ENCODE measurements at regions of chr12 and their contacts with region 1.

Region 1: GRCh38 chr12:54207484-54208294 is 18.9 kb upstream of the SMUG1 start:
- DNase-seq: peak; percentile 37
- ATAC-seq: peak; percentile 96
- H3K4me3 ChIP-seq: no peak overlapping the region
- H3K27ac ChIP-seq: no peak overlapping the region
- H3K4me1 ChIP-seq: no peaks in the 10 kb centered on the region
- H3K27me3 ChIP-seq: peaks cover 68% of the 10 kb centered on the region
- CTCF ChIP-seq: peak; percentile 76
- POLR2A ChIP-seq: no peak
- RAD21 ChIP-seq: peak; percentile 63

Region 2: DNA sequence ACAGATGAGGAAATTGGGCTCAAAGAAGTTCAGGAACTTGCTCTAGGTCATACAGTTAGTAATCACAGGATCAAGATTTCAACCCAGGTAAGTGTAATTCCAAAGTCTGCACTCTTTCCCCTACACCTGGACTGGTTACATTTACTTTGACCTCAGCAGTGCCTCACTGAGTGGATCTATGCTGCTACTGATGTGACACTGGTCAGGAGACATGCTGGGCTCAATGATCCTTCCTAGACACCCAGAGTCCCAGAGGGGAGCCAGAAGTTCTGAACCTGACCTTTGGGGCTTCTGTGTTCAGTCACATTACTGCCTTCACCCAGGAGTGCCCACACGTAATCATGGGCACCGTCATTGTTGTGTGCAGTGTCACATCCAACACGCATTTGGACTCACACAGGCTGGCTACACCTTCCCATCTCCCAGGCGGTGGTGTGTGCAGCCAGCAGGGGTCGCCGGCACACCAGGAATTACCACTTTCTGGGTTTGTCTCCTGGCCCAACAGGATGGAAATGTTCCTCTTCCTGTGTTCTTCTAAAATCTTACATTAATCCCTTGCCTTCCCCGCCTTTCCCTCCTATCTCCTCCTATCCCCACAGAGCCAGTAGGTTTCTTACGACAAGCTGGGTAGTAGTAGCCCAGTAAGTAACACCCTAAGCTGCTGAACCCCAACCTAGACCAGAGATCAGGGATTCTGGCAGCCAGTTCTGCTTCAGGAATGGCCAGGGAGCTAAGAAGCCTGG is 506.0 kb before region 1 on chr12:
- CTCF ChIA-PET with region 1: no interaction called
- POLR2A ChIA-PET with region 1: no interaction called
- dilution Hi-C with region 1: no loop called
- in situ Hi-C with region 1: no loop called
- intact Hi-C with region 1: loop called (anchors 10 kb)
- DNase-seq: peak; percentile 66
- ATAC-seq: peak; percentile 98
- H3K4me3 ChIP-seq: no peak overlapping the region
- H3K27ac ChIP-seq: no peak overlapping the region
- H3K4me1 ChIP-seq: no peaks in the 10 kb centered on the region
- H3K27me3 ChIP-seq: peaks cover 67% of the 10 kb centered on the region
- CTCF ChIP-seq: peak; percentile 98
- POLR2A ChIP-seq: no peak
- RAD21 ChIP-seq: peak; percentile 97

Region 3: GRCh38 chr12:53757095-53757770 is 450.5 kb before region 1 on chr12:
- CTCF ChIA-PET with region 1: no interaction called
- POLR2A ChIA-PET with region 1: no interaction called
- dilution Hi-C with region 1: no loop called
- in situ Hi-C with region 1: no loop called
- intact Hi-C with region 1: loop called (anchors 5 kb)
- DNase-seq: peak; percentile 55
- ATAC-seq: peak; percentile 89
- H3K4me3 ChIP-seq: no peak overlapping the region
- H3K27ac ChIP-seq: no peak overlapping the region
- H3K4me1 ChIP-seq: peaks cover 2% of the 10 kb centered on the region
- H3K27me3 ChIP-seq: peaks cover 68% of the 10 kb centered on the region
- CTCF ChIP-seq: peak; percentile 64
- POLR2A ChIP-seq: no peak
- RAD21 ChIP-seq: peak; percentile 47

Region 4: DNA sequence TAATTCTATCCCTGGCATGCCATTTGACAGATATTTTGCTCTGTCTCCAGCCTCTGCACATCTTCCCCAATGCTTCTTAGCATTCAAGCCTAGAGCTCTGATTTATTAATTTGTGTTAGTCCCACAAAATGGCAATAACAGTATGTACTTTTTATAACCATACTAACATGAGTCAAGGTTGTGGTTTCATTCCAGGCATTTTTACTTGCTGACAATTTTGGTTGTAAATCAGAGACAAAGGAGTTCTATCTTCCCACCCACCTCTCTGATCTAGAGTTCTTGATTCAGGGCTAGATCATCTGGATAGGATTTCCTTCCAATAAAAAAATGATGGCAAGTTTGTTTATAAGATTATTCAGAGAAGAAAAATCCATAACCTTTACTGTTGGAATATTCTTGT is 437.4 kb before region 1 on chr12:
- CTCF ChIA-PET with region 1: no interaction called
- POLR2A ChIA-PET with region 1: no interaction called
- dilution Hi-C with region 1: no loop called
- in situ Hi-C with region 1: loop called (anchors 10 kb)
- intact Hi-C with region 1: no loop called
- DNase-seq: peak; percentile 97
- ATAC-seq: peak; percentile 84
- H3K4me3 ChIP-seq: no peak overlapping the region
- H3K27ac ChIP-seq: no peak overlapping the region
- H3K4me1 ChIP-seq: peaks cover 13% of the 10 kb centered on the region
- H3K27me3 ChIP-seq: no peaks in the 10 kb centered on the region
- CTCF ChIP-seq: no peak
- POLR2A ChIP-seq: no peak
- RAD21 ChIP-seq: no peak

Region 5: GRCh38 chr12:54005853-54006686 is 201.6 kb before region 1 on chr12:
- CTCF ChIA-PET with region 1: interaction called, 18 read pairs
- POLR2A ChIA-PET with region 1: no interaction called
- dilution Hi-C with region 1: no loop called
- in situ Hi-C with region 1: no loop called
- intact Hi-C with region 1: loop called (anchors 1 kb)
- DNase-seq: peak; percentile 62
- ATAC-seq: peak; percentile 93
- H3K4me3 ChIP-seq: no peak overlapping the region
- H3K27ac ChIP-seq: no peak overlapping the region
- H3K4me1 ChIP-seq: no peaks in the 10 kb centered on the region
- H3K27me3 ChIP-seq: peaks cover 90% of the 10 kb centered on the region
- CTCF ChIP-seq: peak; percentile 95
- POLR2A ChIP-seq: no peak
- RAD21 ChIP-seq: peak; percentile 93

Region 6: GRCh38 chr12:54439521-54440255 is 232.0 kb after region 1 on chr12:
- CTCF ChIA-PET with region 1: no interaction called
- POLR2A ChIA-PET with region 1: interaction called, 12 read pairs
- dilution Hi-C with region 1: no loop called
- in situ Hi-C with region 1: no loop called
- intact Hi-C with region 1: loop called (anchors 10 kb)
- DNase-seq: peak; percentile 86
- ATAC-seq: peak; percentile 98
- H3K4me3 ChIP-seq: no peak overlapping the region
- H3K27ac ChIP-seq: no peak overlapping the region
- H3K4me1 ChIP-seq: peaks cover 4% of the 10 kb centered on the region
- H3K27me3 ChIP-seq: peaks cover 10% of the 10 kb centered on the region
- CTCF ChIP-seq: peak; percentile 95
- POLR2A ChIP-seq: no peak
- RAD21 ChIP-seq: peak; percentile 96

Region 7: GRCh38 chr12:55068416-55069010 is 860.8 kb after region 1 on chr12:
- CTCF ChIA-PET with region 1: no interaction called
- POLR2A ChIA-PET with region 1: no interaction called
- dilution Hi-C with region 1: no loop called
- in situ Hi-C with region 1: no loop called
- intact Hi-C with region 1: no loop called
- DNase-seq: peak; percentile 43
- ATAC-seq: peak; percentile 97
- H3K4me3 ChIP-seq: no peak overlapping the region
- H3K27ac ChIP-seq: no peak overlapping the region
- H3K4me1 ChIP-seq: no peaks in the 10 kb centered on the region
- H3K27me3 ChIP-seq: no peaks in the 10 kb centered on the region
- CTCF ChIP-seq: peak; percentile 62
- POLR2A ChIP-seq: no peak
- RAD21 ChIP-seq: 0 out of 2 replicates have a peak, but pooled peaks have one; percentile 9